ENCODE measurements at regions of chr12 and their contacts with region 1.

Region 1: GRCh38 chr12:122951979-122952892 is 14.0 kb downstream of the ABCB9 start:
- DNase-seq: peak; percentile 84 to 91
- H3K4me3 ChIP-seq: no peak overlapping the region
- H3K27ac ChIP-seq: peak overlapping the region; percentile 1 to 63 (median 31)
- H3K4me1 ChIP-seq: peaks cover 10 to 41% (median 15%) of the 10 kb centered on the region in 4 donors
- H3K27me3 ChIP-seq: no peaks in the 10 kb centered on the region
- CTCF ChIP-seq: peak in 5 of 7 experiments; percentile 69 to 87 (median 77)
- EP300 ChIP-seq: no peak
- POLR2A ChIP-seq: no peak

Region 2: DNA sequence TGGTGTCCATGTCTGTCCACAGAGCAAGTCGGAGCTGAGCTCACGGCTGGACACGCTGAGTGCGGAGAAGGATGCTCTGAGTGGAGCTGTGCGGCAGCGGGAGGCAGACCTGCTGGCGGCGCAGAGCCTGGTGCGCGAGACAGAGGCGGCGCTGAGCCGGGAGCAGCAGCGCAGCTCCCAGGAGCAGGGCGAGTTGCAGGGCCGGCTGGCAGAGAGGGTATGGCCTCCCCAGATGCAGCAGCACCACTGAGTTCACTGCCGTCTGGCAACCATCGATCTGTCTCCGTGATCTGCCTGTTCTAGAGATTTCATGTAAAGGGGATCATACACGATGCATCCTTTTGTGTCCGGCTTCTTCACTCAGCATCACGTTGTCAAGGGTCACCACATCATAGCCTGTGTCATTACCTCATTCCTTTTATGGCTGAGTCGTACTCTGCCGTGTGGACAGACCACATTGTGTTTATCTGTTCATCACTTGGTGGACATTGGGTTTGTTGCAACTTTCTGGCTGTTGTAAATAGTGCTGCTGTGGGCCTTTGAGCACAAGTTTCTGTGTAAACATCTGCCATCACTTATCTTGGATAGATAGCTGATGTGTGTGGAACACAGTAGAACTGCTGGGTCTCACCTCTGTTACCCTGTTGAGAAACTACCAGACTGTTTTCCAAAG is 95.1 kb before region 1 on chr12:
- intact Hi-C with region 1: loop called (anchors 5 kb)
- DNase-seq: no peak
- H3K4me3 ChIP-seq: no peak overlapping the region
- H3K27ac ChIP-seq: no peak overlapping the region
- H3K4me1 ChIP-seq: peaks cover 15 to 56% (median 43%) of the 10 kb centered on the region in 4 donors
- H3K27me3 ChIP-seq: no peaks in the 10 kb centered on the region
- CTCF ChIP-seq: no peak
- EP300 ChIP-seq: no peak
- POLR2A ChIP-seq: no peak

Measured in stomach (tissue), 19 donors.